HepG2 (cell line): ENCODE measurements at regions of chr19 and their contacts with region 1.

Region 1: DNA sequence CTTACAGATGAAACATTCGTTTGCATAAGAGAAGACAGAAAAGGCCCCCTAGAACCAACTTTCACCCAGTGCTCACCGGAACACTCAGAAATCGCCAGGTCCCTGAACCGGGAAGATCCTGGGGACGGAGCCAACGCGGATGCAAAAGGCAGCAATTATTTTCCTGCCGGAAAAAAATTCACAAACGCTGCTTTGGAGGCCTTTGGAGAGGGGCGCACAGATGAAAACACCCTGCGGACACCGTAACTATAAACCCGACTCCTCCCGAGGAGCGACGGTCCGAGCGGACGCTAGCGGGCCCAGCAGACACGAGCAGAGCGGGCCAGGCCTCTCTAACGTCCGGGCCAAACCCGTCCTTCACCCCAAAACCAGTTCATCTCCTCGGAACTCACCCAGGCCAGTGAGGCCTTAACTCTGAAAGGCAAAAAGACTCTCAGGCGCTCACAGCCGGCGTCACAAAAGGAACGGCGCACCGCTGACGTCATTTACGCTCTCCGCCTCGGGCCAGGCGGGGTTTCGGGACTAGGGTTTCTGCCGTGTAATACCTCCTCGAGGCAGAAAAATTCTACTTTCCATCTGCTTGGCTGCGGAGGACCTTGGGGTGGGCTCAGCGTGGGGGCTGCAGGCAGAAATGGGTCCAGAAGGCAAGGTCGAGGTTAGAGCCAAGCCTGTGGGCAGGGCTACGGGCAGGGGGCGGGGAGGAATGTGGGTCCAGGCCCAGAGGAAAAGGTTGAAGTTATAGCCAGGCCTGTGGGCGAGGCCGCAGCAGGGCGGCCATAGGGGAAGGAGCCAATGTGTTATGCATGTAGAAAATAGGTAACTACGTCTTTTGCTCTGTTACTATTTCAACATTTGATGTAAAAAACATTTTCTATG is at the start of gene ZNF426:
- DNase-seq: peak; percentile 84
- ATAC-seq: peak; percentile 98
- H3K4me3 ChIP-seq: peak within 1 kb of the TSS; percentile 65 to 88 (median 86)
- H3K27ac ChIP-seq: peak within 1 kb of the TSS; percentile 89
- H3K4me1 ChIP-seq: peaks cover 22% of the 10 kb centered on the region
- H3K27me3 ChIP-seq: no peaks in the 10 kb centered on the region; a peak in 1 of 5 replicates
- CTCF ChIP-seq: peak; percentile 8; the same call in 1 of the 2 replicates
- EP300 ChIP-seq: no peak
- POLR2A ChIP-seq: peak; percentile 67 to 80
- RAD21 ChIP-seq: peak; percentile 21; the same call in 1 of the 2 replicates
- total RNA-seq, gene ZNF426: 14.9 and 20.6 TPM in 2 replicates

Region 2: GRCh38 chr19:9323919-9324583 is 214.4 kb before region 1 on chr19 and contains the start of gene ZNF559:
- CTCF ChIA-PET with region 1: no interaction called
- POLR2A ChIA-PET with region 1: no interaction called
- in situ Hi-C with region 1: no loop called
- intact Hi-C with region 1: loop called (anchors 1 kb)
- DNase-seq: peak; percentile 85
- ATAC-seq: peak; percentile 96
- H3K4me3 ChIP-seq: peak within 1 kb of the TSS; percentile 52 to 74 (median 64); a peak in 5 of 6 replicates
- H3K27ac ChIP-seq: peak within 1 kb of the TSS; percentile 74
- H3K4me1 ChIP-seq: 0 out of 2 replicates have a peak, but pooled peaks cover 10% of the 10 kb centered on the region
- H3K27me3 ChIP-seq: no peaks in the 10 kb centered on the region
- CTCF ChIP-seq: peak; percentile 30; the same call in 1 of the 2 replicates
- EP300 ChIP-seq: no peak
- POLR2A ChIP-seq: no peak; a peak in 1 of 4 replicates
- RAD21 ChIP-seq: no peak
- total RNA-seq, gene ZNF559: 9.5 and 9.8 TPM in 2 replicates

Region 3: DNA sequence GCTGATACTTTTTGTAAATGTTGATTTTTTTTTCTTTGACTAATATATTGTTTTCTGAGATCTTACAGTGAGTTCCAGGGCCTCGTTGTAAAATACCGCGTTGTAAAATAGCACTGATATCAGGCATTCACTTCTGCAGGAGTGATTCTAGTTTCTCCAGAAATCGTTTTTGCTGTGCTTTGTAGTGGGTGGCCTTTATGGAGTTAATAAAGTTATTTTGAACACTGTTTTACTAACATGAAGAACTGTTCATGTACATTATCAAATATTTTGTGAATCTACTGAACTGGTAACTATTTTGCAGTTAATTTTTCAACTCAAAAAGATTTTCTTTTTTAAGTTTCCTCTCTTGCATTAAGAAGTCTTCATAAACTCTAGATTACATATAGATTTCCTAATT is 102.1 kb before region 1 on chr19:
- CTCF ChIA-PET with region 1: no interaction called
- POLR2A ChIA-PET with region 1: no interaction called
- in situ Hi-C with region 1: no loop called
- intact Hi-C with region 1: no loop called
- DNase-seq: no peak
- ATAC-seq: no peak
- H3K4me3 ChIP-seq: peak overlapping the region; percentile 87 to 97 (median 95)
- H3K27ac ChIP-seq: no peak overlapping the region
- H3K4me1 ChIP-seq: peaks cover 21% of the 10 kb centered on the region
- H3K27me3 ChIP-seq: no peaks in the 10 kb centered on the region; a peak in 1 of 5 replicates
- CTCF ChIP-seq: no peak
- EP300 ChIP-seq: no peak
- POLR2A ChIP-seq: no peak
- RAD21 ChIP-seq: no peak

Region 4: DNA sequence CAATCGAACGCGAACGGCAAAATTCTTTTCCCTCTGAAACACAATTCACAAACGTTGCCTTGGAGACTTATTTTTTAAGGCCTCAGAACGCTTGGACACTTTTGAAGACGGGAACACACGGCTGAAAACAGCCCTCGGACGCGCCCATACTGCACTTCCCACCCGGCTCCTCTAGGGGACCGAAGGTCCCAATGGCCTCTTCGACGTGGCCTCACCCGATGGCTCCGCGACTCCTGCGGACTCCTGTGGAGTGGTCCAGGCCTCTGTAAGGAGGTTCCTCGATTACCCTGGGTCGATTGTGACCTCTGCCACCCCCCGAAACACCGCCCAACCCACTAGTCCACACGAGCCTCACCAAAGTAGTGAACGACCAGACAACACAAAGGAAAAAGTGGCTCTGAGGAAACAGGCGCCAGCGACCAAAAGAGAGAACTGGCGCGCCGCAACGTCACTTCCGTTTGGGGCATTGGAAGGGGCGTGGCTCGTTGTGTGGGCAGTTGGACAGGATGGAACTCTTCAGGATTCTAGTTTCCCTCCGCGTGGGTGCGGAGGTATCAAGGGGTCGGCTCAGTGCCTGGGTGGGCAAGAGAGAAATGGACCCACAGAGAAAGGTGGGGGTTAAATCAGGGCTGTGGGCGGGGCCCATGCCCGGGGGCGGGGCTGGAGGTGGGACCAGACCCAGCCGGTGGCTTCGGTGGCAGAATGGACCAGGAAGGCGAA is 40.1 kb before region 1 on chr19 and contains the start of gene ZNF560:
- CTCF ChIA-PET with region 1: no interaction called
- POLR2A ChIA-PET with region 1: no interaction called
- in situ Hi-C with region 1: no loop called
- intact Hi-C with region 1: no loop called
- DNase-seq: no peak
- ATAC-seq: no peak
- H3K4me3 ChIP-seq: no peak within 1 kb of the TSS
- H3K27ac ChIP-seq: no peak within 1 kb of the TSS
- H3K4me1 ChIP-seq: no peaks in the 10 kb centered on the region
- H3K27me3 ChIP-seq: no peaks in the 10 kb centered on the region
- CTCF ChIP-seq: no peak
- EP300 ChIP-seq: no peak
- POLR2A ChIP-seq: no peak
- RAD21 ChIP-seq: no peak
- total RNA-seq, gene ZNF560: not detected in 2 replicates

Region 5: DNA sequence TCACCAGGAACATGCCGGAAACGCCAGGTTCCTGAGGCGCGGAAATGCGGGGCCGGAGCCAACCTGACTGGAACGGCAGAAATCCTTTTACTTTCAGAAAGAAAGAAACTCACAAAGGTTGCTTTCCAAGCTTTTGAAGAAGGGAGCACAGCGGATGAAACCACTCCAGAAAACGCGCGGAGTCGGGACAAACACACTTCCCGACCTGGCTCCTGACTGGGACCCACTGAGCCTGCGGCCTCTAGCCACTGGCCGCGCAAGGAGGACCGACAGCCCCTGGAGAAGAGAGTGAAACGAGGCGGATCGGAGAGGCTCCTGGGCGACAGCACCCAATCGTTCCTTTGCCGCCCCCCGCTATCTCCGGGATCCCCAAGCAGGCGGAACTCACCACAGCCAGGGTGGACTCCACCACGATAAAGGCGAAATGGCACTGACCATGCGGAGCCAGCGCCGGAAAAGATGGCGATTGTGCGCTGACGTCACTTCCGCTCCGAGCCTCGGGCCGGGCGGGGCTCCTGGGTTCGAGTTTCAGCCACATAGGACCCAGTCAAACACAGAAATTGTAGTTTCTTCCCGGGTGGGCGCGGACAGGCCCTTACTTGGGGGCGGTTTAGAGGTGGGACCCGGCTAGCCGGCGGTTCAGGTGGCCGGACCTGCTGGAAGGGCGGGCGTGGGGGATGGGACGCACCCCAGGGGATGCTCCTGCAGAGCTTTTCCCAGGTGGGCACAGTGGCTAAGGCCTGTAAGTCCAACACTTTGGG is 45.8 kb after region 1 on chr19 and contains the start of gene ZNF121:
- CTCF ChIA-PET with region 1: no interaction called
- POLR2A ChIA-PET with region 1: no interaction called
- in situ Hi-C with region 1: no loop called
- intact Hi-C with region 1: loop called (anchors 1 kb)
- DNase-seq: peak; percentile 77
- ATAC-seq: peak; percentile 91
- H3K4me3 ChIP-seq: peak within 1 kb of the TSS; percentile 78 to 92 (median 79)
- H3K27ac ChIP-seq: peak within 1 kb of the TSS; percentile 85
- H3K4me1 ChIP-seq: peaks cover 39% of the 10 kb centered on the region
- H3K27me3 ChIP-seq: no peaks in the 10 kb centered on the region; a peak in 1 of 5 replicates
- CTCF ChIP-seq: peak; percentile 3; the same call in 1 of the 2 replicates
- EP300 ChIP-seq: no peak
- POLR2A ChIP-seq: peak; percentile 93 to 95
- RAD21 ChIP-seq: no peak
- total RNA-seq, gene ZNF121: 56.3 and 78.4 TPM in 2 replicates

Region 6: DNA sequence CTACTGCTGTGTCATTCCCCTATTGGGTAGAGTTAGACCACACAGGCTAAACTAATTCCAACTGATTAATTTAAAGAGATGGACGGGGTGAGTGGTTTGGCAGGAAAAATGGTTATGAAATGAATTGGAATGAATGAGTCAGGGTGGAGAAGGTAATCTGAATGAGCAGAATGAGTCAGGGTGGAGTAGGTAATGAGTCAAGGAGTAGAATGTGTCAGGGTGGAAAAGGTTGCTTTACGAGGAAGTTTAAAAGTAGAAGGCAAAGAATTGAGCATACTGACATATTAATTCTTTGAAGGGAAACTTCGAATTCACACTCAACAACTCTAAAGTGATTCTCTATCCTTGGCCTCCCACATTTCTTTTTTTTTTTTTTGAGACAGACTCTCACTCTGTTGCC is 58.6 kb after region 1 on chr19:
- CTCF ChIA-PET with region 1: no interaction called
- POLR2A ChIA-PET with region 1: no interaction called
- in situ Hi-C with region 1: no loop called
- intact Hi-C with region 1: no loop called
- DNase-seq: no peak
- ATAC-seq: no peak
- H3K4me3 ChIP-seq: no peak overlapping the region
- H3K27ac ChIP-seq: no peak overlapping the region
- H3K4me1 ChIP-seq: no peaks in the 10 kb centered on the region
- H3K27me3 ChIP-seq: peaks cover 0 to 17% of the 10 kb centered on the region in 2 experiments; a peak in 1 of 5 replicates
- CTCF ChIP-seq: no peak
- EP300 ChIP-seq: no peak
- POLR2A ChIP-seq: no peak
- RAD21 ChIP-seq: no peak

Region 7: GRCh38 chr19:10269333-10270179 is 731.1 kb after region 1 on chr19:
- CTCF ChIA-PET with region 1: no interaction called
- POLR2A ChIA-PET with region 1: no interaction called
- in situ Hi-C with region 1: no loop called
- intact Hi-C with region 1: no loop called
- DNase-seq: peak; percentile 51
- ATAC-seq: peak; percentile 55
- H3K4me3 ChIP-seq: peak overlapping the region in 2 of 3 experiments; percentile 30 to 76; a peak in 3 of 6 replicates
- H3K27ac ChIP-seq: no peak overlapping the region
- H3K4me1 ChIP-seq: peaks cover 70% of the 10 kb centered on the region
- H3K27me3 ChIP-seq: no peaks in the 10 kb centered on the region
- CTCF ChIP-seq: peak; percentile 96
- EP300 ChIP-seq: no peak
- POLR2A ChIP-seq: no peak
- RAD21 ChIP-seq: peak; percentile 94